Right ventricle myocardium inferior (tissue), 1 donor: ENCODE measurements at regions of chr15 and their contacts with region 1.

Region 1: DNA sequence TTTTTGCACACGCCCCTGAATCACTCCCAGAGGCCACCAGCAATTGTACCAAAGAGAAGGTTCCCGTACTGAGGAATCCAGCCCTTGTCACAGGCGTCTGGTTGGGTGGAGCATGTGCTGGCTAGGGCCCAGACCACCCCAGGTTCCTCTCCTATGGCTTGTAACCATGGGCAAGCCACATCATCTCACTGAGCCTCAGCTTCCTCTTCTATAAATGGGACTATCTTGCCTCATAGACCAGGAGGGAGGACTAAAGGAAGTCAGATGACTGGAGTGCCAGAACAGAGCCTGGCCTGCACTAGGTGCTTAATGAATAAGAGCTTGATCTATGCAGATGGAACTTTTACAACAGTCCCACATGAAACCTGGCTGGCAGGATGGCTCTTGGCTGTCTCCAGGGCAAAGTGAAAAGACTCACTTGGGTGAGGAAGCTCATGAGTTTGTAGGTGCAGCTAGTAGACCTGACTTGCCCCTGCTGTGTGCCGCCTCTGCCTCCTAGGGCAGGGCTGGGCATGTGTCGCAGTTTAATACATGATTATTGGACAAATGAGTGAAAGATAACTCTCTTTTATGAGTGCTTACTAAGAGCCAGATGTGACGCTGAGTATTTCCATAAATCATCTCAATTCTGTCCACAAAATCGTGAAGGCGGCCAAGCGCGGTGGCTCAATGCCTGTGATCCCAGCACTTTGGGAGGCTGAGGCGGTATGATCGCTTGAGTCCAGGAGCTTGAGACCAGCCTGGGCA is 29.3 kb downstream of the CTSH start:
- DNase-seq: peak; percentile 79
- ATAC-seq: peak; percentile 64

Region 2: DNA sequence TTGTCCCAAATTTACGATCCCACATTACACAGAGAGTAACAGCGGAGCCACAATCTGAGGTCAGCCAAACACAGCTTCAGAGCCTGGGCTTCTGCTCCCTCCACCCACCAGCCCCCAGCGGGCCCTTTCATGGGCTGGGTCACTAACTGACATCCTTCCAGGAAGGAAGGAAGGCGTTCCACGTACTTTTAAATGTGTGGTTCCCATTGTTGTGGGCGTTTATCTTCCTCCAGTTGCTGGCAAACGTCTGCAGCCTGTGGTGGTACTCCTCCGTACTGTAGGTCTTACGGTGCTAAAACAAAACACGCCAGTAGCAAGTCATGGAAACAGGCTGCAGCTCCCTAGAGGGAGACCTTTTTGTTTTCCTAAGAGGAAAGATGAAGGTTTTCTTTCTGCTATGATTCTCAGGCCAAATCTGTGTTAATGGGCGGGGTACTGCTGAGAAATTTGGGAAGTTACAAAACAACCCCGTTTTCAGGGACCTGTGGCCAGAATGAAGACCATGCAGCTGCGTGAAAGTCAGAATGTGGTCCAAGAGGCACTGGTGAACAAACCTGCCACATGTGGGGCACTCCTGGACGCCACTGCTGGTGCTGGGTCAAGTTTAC is 21.7 kb after region 1 on chr15:
- intact Hi-C with region 1: loop called (anchors 1 kb)
- DNase-seq: peak; percentile 76
- ATAC-seq: peak; percentile 70

Region 3: GRCh38 chr15:79065706-79066376 is 150.3 kb after region 1 on chr15:
- intact Hi-C with region 1: no loop called
- DNase-seq: no peak
- ATAC-seq: no peak